ENCODE measurements at regions of chr4 and their contacts with region 1.

Region 1: GRCh38 chr4:134687646-134688628 is 486.3 kb upstream of the PABPC4L start:
- DNase-seq: no peak
- H3K4me3 ChIP-seq: no peak overlapping the region
- H3K27ac ChIP-seq: no peak overlapping the region
- H3K4me1 ChIP-seq: no peaks in the 10 kb centered on the region
- H3K27me3 ChIP-seq: no peaks in the 10 kb centered on the region
- CTCF ChIP-seq: no peak
- EP300 ChIP-seq: no peak
- POLR2A ChIP-seq: no peak

Region 2: GRCh38 chr4:134668237-134668636 is 19.7 kb before region 1 on chr4:
- in situ Hi-C with region 1: no loop called
- intact Hi-C with region 1: loop called (anchors 2 kb)
- DNase-seq: peak; percentile 30
- H3K4me3 ChIP-seq: no peak overlapping the region
- H3K27ac ChIP-seq: no peak overlapping the region
- H3K4me1 ChIP-seq: no peaks in the 10 kb centered on the region
- H3K27me3 ChIP-seq: no peaks in the 10 kb centered on the region
- CTCF ChIP-seq: no peak
- EP300 ChIP-seq: no peak
- POLR2A ChIP-seq: no peak

Measured in transverse colon (tissue), 4 donors.